ENCODE measurements at regions of chr15 and their contacts with region 1.

Region 1: GRCh38 chr15:94230956-94231722 is at the start of gene MCTP2:
- DNase-seq: peak; percentile 96
- H3K4me3 ChIP-seq: peak within 1 kb of the TSS; percentile 61 to 88 (median 76)
- H3K27ac ChIP-seq: peak within 1 kb of the TSS; percentile 99
- H3K4me1 ChIP-seq: peaks cover 35% of the 10 kb centered on the region
- H3K27me3 ChIP-seq: no peaks in the 10 kb centered on the region
- CTCF ChIP-seq: peak in 1 of 2 donors; percentile 37
- total RNA-seq, gene MCTP2: 24.5 to 28.0 TPM

Region 2: GRCh38 chr15:92803847-92804609 is 1427.1 kb before region 1 on chr15:
- CTCF ChIA-PET with region 1: no interaction called
- dilution Hi-C with region 1: no loop called
- in situ Hi-C with region 1: no loop called
- intact Hi-C with region 1: loop called (anchors 5 kb)
- DNase-seq: peak; percentile 100
- H3K4me3 ChIP-seq: no peak overlapping the region
- H3K27ac ChIP-seq: peak overlapping the region; percentile 96
- H3K4me1 ChIP-seq: peaks cover 38% of the 10 kb centered on the region
- H3K27me3 ChIP-seq: no peaks in the 10 kb centered on the region
- CTCF ChIP-seq: no peak

Region 3: GRCh38 chr15:93882141-93882540 is 349.0 kb before region 1 on chr15:
- CTCF ChIA-PET with region 1: no interaction called
- dilution Hi-C with region 1: no loop called
- in situ Hi-C with region 1: no loop called
- intact Hi-C with region 1: no loop called
- DNase-seq: no peak
- H3K4me3 ChIP-seq: no peak overlapping the region
- H3K27ac ChIP-seq: no peak overlapping the region
- H3K4me1 ChIP-seq: no peaks in the 10 kb centered on the region
- H3K27me3 ChIP-seq: no peaks in the 10 kb centered on the region
- CTCF ChIP-seq: no peak

Region 4: DNA sequence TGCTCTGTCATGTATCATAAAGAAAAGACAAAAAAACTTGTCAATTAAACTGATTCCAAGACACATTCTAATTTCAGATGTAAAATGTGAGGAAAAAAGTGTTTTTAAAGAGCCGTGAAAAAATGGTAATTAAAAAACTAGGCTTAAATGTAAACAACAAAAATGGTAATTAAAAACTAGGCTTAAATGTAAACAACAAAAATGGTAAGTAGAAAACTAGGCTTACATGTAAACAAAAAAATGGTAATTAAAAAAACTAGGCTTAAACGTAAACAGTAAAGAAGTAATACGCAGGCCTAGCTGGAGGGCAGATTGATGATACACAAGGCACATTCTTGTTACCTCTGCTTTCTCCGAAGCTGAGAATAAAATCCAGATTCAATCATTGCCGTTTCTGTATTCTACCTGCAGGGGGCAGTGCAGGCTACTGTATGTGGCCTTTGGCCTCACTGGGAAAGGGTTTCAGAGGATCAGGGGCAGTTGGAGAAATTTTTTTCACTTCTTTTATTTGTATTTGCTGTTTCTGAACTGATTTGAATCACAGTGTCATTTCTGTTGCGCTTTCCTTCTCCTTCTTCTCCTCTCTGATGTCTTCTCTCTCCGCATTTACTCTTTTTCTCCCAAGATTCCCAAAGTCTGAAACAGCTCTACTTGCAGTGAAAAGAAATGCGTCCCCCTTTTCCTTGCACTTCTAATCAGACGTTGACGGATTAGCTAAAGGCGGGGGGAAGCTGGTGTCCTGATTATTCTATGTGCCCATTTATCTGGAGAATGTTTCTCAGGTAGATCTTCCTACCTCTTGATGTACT is 66.9 kb before region 1 on chr15:
- CTCF ChIA-PET with region 1: no interaction called
- dilution Hi-C with region 1: no loop called
- in situ Hi-C with region 1: no loop called
- intact Hi-C with region 1: loop called (anchors 2 kb)
- DNase-seq: peak; percentile 59
- H3K4me3 ChIP-seq: no peak overlapping the region
- H3K27ac ChIP-seq: no peak overlapping the region
- H3K4me1 ChIP-seq: no peaks in the 10 kb centered on the region
- H3K27me3 ChIP-seq: no peaks in the 10 kb centered on the region
- CTCF ChIP-seq: peak; percentile 81 to 84

Region 5: GRCh38 chr15:94174399-94174802 is 56.7 kb before region 1 on chr15:
- CTCF ChIA-PET with region 1: no interaction called
- dilution Hi-C with region 1: no loop called
- in situ Hi-C with region 1: loop called in 1 of 2 experiments (anchors 10 kb)
- intact Hi-C with region 1: loop called (anchors 1 kb)
- DNase-seq: peak; percentile 93
- H3K4me3 ChIP-seq: no peak overlapping the region
- H3K27ac ChIP-seq: no peak overlapping the region
- H3K4me1 ChIP-seq: peaks cover 15% of the 10 kb centered on the region
- H3K27me3 ChIP-seq: no peaks in the 10 kb centered on the region
- CTCF ChIP-seq: no peak

Region 6: GRCh38 chr15:94297558-94297957 is 66.4 kb after region 1 on chr15:
- CTCF ChIA-PET with region 1: no interaction called
- dilution Hi-C with region 1: no loop called
- in situ Hi-C with region 1: loop called in 1 of 2 experiments (anchors 10 kb)
- intact Hi-C with region 1: no loop called
- DNase-seq: no peak
- H3K4me3 ChIP-seq: no peak overlapping the region
- H3K27ac ChIP-seq: no peak overlapping the region
- H3K4me1 ChIP-seq: no peaks in the 10 kb centered on the region
- H3K27me3 ChIP-seq: no peaks in the 10 kb centered on the region
- CTCF ChIP-seq: no peak

Region 7: GRCh38 chr15:94324117-94324826 is 93.1 kb after region 1 on chr15:
- CTCF ChIA-PET with region 1: no interaction called
- dilution Hi-C with region 1: no loop called
- in situ Hi-C with region 1: no loop called
- intact Hi-C with region 1: loop called (anchors 2 kb)
- DNase-seq: peak; percentile 35
- H3K4me3 ChIP-seq: no peak overlapping the region
- H3K27ac ChIP-seq: no peak overlapping the region
- H3K4me1 ChIP-seq: no peaks in the 10 kb centered on the region
- H3K27me3 ChIP-seq: no peaks in the 10 kb centered on the region
- CTCF ChIP-seq: peak; percentile 93 to 97